CD8-positive, alpha-beta T cell (primary cell): ENCODE measurements at regions of chr19 and their contacts with region 1.

Region 1: GRCh38 chr19:21835810-21836444 is at the start of gene ZNF43:
- DNase-seq: peak; percentile 85 to 96 (median 93)
- ATAC-seq: peak; percentile 97
- H3K4me3 ChIP-seq: peak within 1 kb of the TSS; percentile 84 to 85
- H3K4me3 Mint-ChIP-seq: peak within 1 kb of the TSS; percentile 98
- H3K27ac ChIP-seq: peak within 1 kb of the TSS; percentile 75 to 84
- H3K27ac Mint-ChIP-seq: peak within 1 kb of the TSS; percentile 97
- H3K4me1 ChIP-seq: peaks cover 9% of the 10 kb centered on the region
- H3K4me1 Mint-ChIP-seq: peaks cover 34% of the 10 kb centered on the region
- H3K27me3 ChIP-seq: no peaks in the 10 kb centered on the region
- H3K27me3 Mint-ChIP-seq: no peaks in the 10 kb centered on the region
- CTCF ChIP-seq: no peak
- total RNA-seq, gene ZNF43: 29.9 to 31.8 TPM

Region 2: GRCh38 chr19:21704320-21704719 is 131.6 kb before region 1 on chr19:
- CTCF ChIA-PET with region 1: no interaction called
- POLR2A ChIA-PET with region 1: no interaction called
- intact Hi-C with region 1: no loop called
- DNase-seq: no peak
- ATAC-seq: no peak
- H3K4me3 ChIP-seq: no peak overlapping the region
- H3K4me3 Mint-ChIP-seq: no peak overlapping the region
- H3K27ac ChIP-seq: no peak overlapping the region
- H3K27ac Mint-ChIP-seq: no peak overlapping the region
- H3K4me1 ChIP-seq: no peaks in the 10 kb centered on the region
- H3K4me1 Mint-ChIP-seq: no peaks in the 10 kb centered on the region
- H3K27me3 ChIP-seq: no peaks in the 10 kb centered on the region
- H3K27me3 Mint-ChIP-seq: peaks cover 1% of the 10 kb centered on the region
- CTCF ChIP-seq: no peak

Region 3: DNA sequence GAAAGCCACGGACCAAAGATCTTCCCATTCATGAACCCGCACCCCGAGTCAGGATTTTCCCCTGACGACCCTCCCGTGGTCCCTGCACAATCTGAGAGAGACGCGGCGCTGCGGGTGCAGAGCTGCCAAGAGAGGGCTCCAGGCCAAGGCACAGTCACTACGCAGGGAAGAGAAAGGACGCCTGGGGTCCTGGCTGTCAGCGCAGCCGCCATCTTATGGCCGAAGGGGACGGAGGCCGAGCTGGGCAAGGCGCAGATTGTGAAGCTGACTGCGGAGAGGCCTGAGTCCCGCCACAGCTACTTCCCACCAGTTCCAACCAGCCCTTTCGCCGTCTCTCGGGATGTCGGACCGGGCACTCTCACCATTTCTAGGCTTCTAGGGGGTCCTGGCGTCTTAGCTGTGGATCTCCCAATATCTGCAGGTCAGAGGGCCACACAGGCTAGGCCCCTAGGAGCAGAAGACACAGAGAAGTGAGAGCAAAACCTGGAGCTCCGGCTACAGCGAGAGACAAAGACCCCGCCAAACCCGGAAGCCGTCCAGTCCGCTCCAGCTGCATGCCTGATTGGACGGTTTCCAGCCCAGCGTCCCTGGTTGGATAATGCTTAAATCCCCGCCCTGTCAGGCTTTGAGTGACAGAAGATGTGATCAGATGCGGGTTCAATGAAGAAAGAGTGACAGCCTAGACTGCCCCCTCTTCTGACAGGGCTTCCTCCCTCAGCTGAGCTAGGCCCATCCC is 68.7 kb before region 1 on chr19 and contains the start of gene ZNF100:
- CTCF ChIA-PET with region 1: interaction called, 3 read pairs
- POLR2A ChIA-PET with region 1: interaction called, 20 read pairs
- intact Hi-C with region 1: loop called (anchors 5 kb)
- DNase-seq: peak; percentile 72 to 93 (median 87)
- ATAC-seq: peak; percentile 98
- H3K4me3 ChIP-seq: peak within 1 kb of the TSS; percentile 86 to 98
- H3K4me3 Mint-ChIP-seq: peak within 1 kb of the TSS; percentile 97
- H3K27ac ChIP-seq: peak within 1 kb of the TSS; percentile 71 to 87
- H3K27ac Mint-ChIP-seq: peak within 1 kb of the TSS; percentile 86
- H3K4me1 ChIP-seq: peaks cover 3% of the 10 kb centered on the region
- H3K4me1 Mint-ChIP-seq: peaks cover 21% of the 10 kb centered on the region
- H3K27me3 ChIP-seq: no peaks in the 10 kb centered on the region
- H3K27me3 Mint-ChIP-seq: no peaks in the 10 kb centered on the region
- CTCF ChIP-seq: no peak
- total RNA-seq, gene ZNF100: 5.9 to 6.7 TPM

Region 4: GRCh38 chr19:21851596-21852345 is 15.8 kb after region 1 on chr19:
- CTCF ChIA-PET with region 1: interaction called, 5 read pairs
- POLR2A ChIA-PET with region 1: interaction called, 49 read pairs
- intact Hi-C with region 1: loop called (anchors 1 kb)
- DNase-seq: peak; percentile 72 to 94 (median 90)
- ATAC-seq: peak; percentile 99
- H3K4me3 ChIP-seq: peak overlapping the region; percentile 95
- H3K4me3 Mint-ChIP-seq: peak overlapping the region; percentile 93
- H3K27ac ChIP-seq: peak overlapping the region; percentile 68 to 80
- H3K27ac Mint-ChIP-seq: peak overlapping the region; percentile 91
- H3K4me1 ChIP-seq: peaks cover 11% of the 10 kb centered on the region
- H3K4me1 Mint-ChIP-seq: peaks cover 26% of the 10 kb centered on the region
- H3K27me3 ChIP-seq: no peaks in the 10 kb centered on the region
- H3K27me3 Mint-ChIP-seq: peaks cover 2% of the 10 kb centered on the region
- CTCF ChIP-seq: no peak